Activated CD4-positive, alpha-beta T cell treated with anti-CD3 and anti-CD28 coated beads for 36 hours (primary cell): ENCODE measurements at regions of chr17 and their contacts with region 1.

Region 1: DNA sequence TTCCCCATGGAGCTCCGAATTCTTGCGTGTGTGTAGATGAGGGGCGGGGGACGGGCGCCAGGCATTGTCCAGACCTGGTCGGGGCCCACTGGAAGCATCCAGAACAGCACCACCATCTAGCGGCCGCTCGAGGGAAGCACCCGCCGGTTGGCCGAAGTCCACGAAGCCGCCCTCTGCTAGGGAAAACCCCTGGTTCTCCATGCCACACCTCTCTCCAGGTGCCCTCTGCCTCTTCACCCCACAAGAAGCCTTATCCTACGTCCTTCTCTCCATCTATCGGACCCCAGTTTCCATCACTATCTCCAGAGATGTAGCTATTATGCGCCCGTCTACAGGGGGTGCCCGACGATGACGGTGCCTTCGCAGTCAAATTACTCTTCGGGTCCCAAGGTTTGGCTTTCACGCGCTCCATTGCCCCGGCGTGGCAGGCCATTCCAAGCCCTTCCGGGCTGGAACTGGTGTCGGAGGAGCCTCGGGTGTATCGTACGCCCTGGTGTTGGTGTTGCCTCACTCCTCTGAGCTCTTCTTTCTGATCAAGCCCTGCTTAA is 617 bp upstream of the SENP3 start:
- DNase-seq: peak; percentile 92
- ATAC-seq: peak; percentile 75
- H3K4me3 Mint-ChIP-seq: peak overlapping the region; percentile 79
- H3K27ac Mint-ChIP-seq: peak overlapping the region; percentile 87
- H3K4me1 Mint-ChIP-seq: peaks cover 46% of the 10 kb centered on the region
- H3K27me3 Mint-ChIP-seq: no peaks in the 10 kb centered on the region

Region 2: DNA sequence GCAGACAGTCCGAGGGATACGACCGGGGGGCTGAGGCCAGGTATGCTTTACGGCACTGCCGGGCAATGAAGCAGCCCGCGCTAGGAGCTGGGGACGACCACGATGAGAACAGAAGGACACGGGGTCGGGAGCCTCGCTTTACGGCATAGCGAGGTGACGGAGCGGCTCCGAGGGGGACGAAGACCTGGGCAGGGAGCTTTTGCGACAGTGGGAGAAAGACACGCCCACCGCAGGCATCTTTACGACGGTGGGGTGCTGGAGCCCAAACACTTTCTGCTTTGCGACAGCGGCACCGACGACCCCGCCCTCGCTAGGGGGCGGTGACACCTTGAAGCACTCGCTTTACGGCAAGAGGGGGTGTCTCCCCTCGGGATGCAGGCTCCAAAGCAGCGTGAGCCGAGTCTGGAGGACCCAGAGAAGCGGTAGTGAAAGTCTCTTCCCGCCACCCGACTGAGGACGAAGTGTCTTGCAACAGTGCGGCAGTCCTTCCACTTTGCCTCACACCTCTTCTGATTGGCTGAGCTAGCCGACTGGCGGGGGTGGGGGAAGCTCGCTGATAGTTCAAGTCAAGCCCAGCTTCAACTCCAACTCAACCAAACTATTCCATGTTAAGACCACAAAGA is 231.6 kb before region 1 on chr17:
- CTCF ChIA-PET with region 1: interaction called, 3 read pairs
- POLR2A ChIA-PET with region 1: no interaction called
- intact Hi-C with region 1: loop called in 1 of 2 experiments (anchors 1 kb)
- DNase-seq: peak; percentile 98
- ATAC-seq: peak; percentile 69
- H3K4me3 Mint-ChIP-seq: peak overlapping the region; percentile 89
- H3K27ac Mint-ChIP-seq: peak overlapping the region; percentile 96
- H3K4me1 Mint-ChIP-seq: peaks cover 44% of the 10 kb centered on the region
- H3K27me3 Mint-ChIP-seq: no peaks in the 10 kb centered on the region

Region 3: DNA sequence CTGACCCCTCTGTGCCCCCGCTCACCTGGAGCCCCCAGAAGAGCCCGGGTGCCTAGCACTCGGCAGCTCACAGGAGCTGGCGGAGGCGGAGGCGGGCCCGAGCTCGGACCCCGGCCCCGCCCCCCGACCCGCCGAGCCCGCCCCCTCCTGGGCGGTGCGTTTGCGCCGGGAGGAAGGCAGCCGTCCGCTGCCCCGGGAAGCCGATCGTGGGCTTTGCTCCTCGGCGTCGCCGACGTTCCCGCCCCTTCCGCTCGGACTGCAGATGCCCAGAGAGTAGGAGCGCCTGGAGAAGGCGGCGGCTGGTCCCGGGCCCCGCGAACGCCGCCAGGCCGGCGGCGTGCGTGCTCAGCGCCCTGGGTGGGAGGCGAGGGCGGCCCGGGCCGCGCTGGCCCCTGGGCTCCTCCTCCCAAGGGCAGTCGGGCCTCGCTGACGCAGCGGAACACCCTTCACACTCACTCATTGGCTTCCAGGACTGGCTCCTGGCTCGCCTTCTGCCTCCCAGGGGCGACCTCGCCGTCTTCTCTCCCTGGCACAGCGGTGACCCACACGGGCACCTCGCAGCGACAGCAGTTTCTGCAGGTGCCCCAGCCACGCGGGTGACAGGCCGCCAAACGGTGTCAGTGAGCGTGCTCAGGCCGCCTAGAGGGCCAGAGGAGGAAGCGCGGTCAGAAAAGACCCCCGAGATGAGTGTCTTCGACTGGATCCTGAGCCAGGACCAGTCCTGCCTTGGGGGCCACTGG is 166.5 kb before region 1 on chr17 and contains the start of gene PLSCR3:
- CTCF ChIA-PET with region 1: no interaction called
- POLR2A ChIA-PET with region 1: no interaction called
- intact Hi-C with region 1: loop called in 1 of 2 experiments (anchors 1 kb)
- DNase-seq: peak; percentile 90
- ATAC-seq: peak; percentile 86
- H3K4me3 Mint-ChIP-seq: peak within 1 kb of the TSS; percentile 88
- H3K27ac Mint-ChIP-seq: peak within 1 kb of the TSS; percentile 95
- H3K4me1 Mint-ChIP-seq: peaks cover 26% of the 10 kb centered on the region
- H3K27me3 Mint-ChIP-seq: no peaks in the 10 kb centered on the region
- total RNA-seq, gene PLSCR3: 69.3 to 78.9 TPM

Region 4: DNA sequence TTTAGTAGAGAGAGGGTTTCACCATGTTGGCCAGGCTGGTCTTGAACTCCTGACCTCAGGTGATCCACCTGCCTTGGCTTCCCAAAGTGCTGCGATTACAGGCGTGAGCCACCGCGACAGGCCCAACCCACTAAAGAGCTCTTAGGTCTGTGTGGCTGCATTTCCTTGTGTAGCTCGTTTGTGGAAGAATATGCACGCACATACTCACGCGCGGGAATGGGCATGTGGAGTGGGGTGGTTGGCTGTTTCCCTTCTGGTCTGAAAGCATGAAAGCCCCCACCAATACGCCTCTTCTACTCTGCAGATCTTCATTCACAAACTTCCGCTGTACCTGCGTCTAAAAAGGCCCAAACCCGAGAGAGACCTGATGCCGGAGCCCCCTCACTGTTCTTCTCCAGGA is 106.1 kb before region 1 on chr17:
- CTCF ChIA-PET with region 1: interaction called, 3 read pairs
- POLR2A ChIA-PET with region 1: no interaction called
- intact Hi-C with region 1: loop called in 1 of 2 experiments (anchors 1 kb)
- DNase-seq: no peak
- ATAC-seq: no peak
- H3K4me3 Mint-ChIP-seq: peak overlapping the region; percentile 96
- H3K27ac Mint-ChIP-seq: peak overlapping the region; percentile 93
- H3K4me1 Mint-ChIP-seq: peaks cover 19% of the 10 kb centered on the region
- H3K27me3 Mint-ChIP-seq: no peaks in the 10 kb centered on the region

Region 5: GRCh38 chr17:7523033-7523432 is 38.1 kb before region 1 on chr17:
- CTCF ChIA-PET with region 1: interaction called, 26 read pairs
- POLR2A ChIA-PET with region 1: no interaction called
- intact Hi-C with region 1: loop called (anchors 1 to 2 kb)
- DNase-seq: peak; percentile 67
- ATAC-seq: peak; percentile 81
- H3K4me3 Mint-ChIP-seq: no peak overlapping the region
- H3K27ac Mint-ChIP-seq: no peak overlapping the region
- H3K4me1 Mint-ChIP-seq: no peaks in the 10 kb centered on the region
- H3K27me3 Mint-ChIP-seq: no peaks in the 10 kb centered on the region

Region 6: GRCh38 chr17:7583253-7584109 is 22.4 kb after region 1 on chr17 and contains the start of gene MPDU1:
- CTCF ChIA-PET with region 1: interaction called, 30 read pairs
- POLR2A ChIA-PET with region 1: interaction called, 5 read pairs
- intact Hi-C with region 1: loop called in 1 of 2 experiments (anchors 1 kb)
- DNase-seq: peak; percentile 98
- ATAC-seq: peak; percentile 77
- H3K4me3 Mint-ChIP-seq: peak within 1 kb of the TSS; percentile 82
- H3K27ac Mint-ChIP-seq: peak within 1 kb of the TSS; percentile 100
- H3K4me1 Mint-ChIP-seq: peaks cover 56% of the 10 kb centered on the region
- H3K27me3 Mint-ChIP-seq: no peaks in the 10 kb centered on the region
- total RNA-seq, gene MPDU1: 51.7 to 77.0 TPM